Caco-2 (cell line): ENCODE measurements at regions of chr3 and their contacts with region 1.

Region 1: GRCh38 chr3:52210550-52211046 is 12.6 kb downstream of the ALAS1 start:
- DNase-seq: peak; percentile 68 to 78
- H3K4me3 ChIP-seq: no peak overlapping the region
- H3K4me3 Mint-ChIP-seq: no peak overlapping the region
- H3K27ac Mint-ChIP-seq: peak overlapping the region; percentile 55
- H3K4me1 ChIP-seq: peaks cover 13% of the 10 kb centered on the region
- H3K4me1 Mint-ChIP-seq: peaks cover 9% of the 10 kb centered on the region
- H3K27me3 ChIP-seq: no peaks in the 10 kb centered on the region
- H3K27me3 Mint-ChIP-seq: no peaks in the 10 kb centered on the region
- CTCF ChIP-seq: no peak

Region 2: GRCh38 chr3:52162250-52162872 is 48.2 kb before region 1 on chr3:
- CTCF ChIA-PET with region 1: no interaction called
- POLR2A ChIA-PET with region 1: no interaction called
- intact Hi-C with region 1: no loop called
- DNase-seq: no peak
- H3K4me3 ChIP-seq: no peak overlapping the region
- H3K4me3 Mint-ChIP-seq: no peak overlapping the region
- H3K27ac Mint-ChIP-seq: no peak overlapping the region
- H3K4me1 ChIP-seq: no peaks in the 10 kb centered on the region
- H3K4me1 Mint-ChIP-seq: no peaks in the 10 kb centered on the region
- H3K27me3 ChIP-seq: no peaks in the 10 kb centered on the region
- H3K27me3 Mint-ChIP-seq: no peaks in the 10 kb centered on the region
- CTCF ChIP-seq: no peak

Region 3: GRCh38 chr3:52197842-52198668 is 12.5 kb before region 1 on chr3 and contains the start of gene ALAS1:
- CTCF ChIA-PET with region 1: interaction called, 4 read pairs
- POLR2A ChIA-PET with region 1: interaction called, 3 read pairs
- intact Hi-C with region 1: loop called (anchors 1 kb)
- DNase-seq: peak; percentile 90 to 97
- H3K4me3 ChIP-seq: peak within 1 kb of the TSS; percentile 95
- H3K4me3 Mint-ChIP-seq: peak within 1 kb of the TSS; percentile 98
- H3K27ac Mint-ChIP-seq: peak within 1 kb of the TSS; percentile 90
- H3K4me1 ChIP-seq: peaks cover 30% of the 10 kb centered on the region
- H3K4me1 Mint-ChIP-seq: peaks cover 7% of the 10 kb centered on the region
- H3K27me3 ChIP-seq: no peaks in the 10 kb centered on the region
- H3K27me3 Mint-ChIP-seq: no peaks in the 10 kb centered on the region
- CTCF ChIP-seq: peak in 1 of 2 experiments; percentile 21
- total RNA-seq, gene ALAS1: 53.1 and 60.0 TPM in 2 replicates